Naive thymus-derived CD8-positive, alpha-beta T cell (primary cell): ENCODE measurements at regions of chr12 and their contacts with region 1.

Region 1: DNA sequence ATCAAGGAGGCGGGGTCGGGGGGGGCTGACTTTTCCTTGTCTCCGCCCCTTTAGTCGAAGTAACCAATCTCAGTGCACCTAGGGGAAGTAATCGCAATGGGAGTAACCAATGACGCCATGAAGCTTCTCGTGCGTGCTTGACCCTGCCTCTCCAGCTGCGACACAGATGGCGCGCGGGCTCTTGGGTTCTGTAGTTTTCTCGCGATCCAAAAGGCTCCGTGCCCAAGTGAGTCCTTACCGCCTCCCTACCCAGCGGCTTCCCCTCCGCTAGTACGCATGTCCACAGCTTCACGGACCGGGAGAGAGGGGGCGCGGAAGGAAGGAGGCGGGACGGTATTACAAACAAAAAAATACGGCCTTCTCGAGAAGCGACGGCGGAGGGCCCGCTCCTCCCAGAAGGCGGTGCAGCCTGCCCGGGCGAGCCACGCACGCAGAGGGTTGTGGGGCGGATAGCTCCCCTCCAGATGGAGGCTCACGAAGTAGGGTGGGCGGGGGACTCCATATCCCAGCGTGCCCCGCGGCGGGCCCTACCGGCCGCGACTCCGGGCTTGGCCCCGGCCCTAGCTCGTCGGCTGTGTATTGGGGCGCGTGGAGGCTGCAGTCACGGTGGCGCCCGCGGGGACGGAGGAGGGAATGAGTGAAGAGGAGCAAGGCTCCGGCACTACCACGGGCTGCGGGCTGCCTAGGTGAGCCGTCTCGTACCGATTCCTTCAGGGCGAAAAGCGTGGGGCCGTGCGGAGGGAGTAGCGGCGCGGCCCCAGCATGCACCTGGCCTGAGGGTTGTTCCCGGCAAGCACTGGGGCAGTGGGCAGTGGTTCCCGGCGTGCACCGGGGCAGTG is at the start of gene TARBP2:
- DNase-seq: peak; percentile 90 to 99 (median 99)
- ATAC-seq: peak; percentile 78 to 81
- H3K4me3 Mint-ChIP-seq: peak within 1 kb of the TSS; percentile 89 to 96 (median 94)
- H3K27ac Mint-ChIP-seq: peak within 1 kb of the TSS; percentile 90 to 99 (median 97)
- H3K4me1 Mint-ChIP-seq: peaks cover 22 to 55% (median 44%) of the 10 kb centered on the region in 4 donors
- H3K27me3 Mint-ChIP-seq: no peaks in the 10 kb centered on the region
- polyA plus RNA-seq, gene TARBP2: 27.0 to 32.1 (median 27.9) TPM

Region 2: GRCh38 chr12:53295070-53295890 is 205.7 kb before region 1 on chr12 and contains the start of gene PFDN5:
- POLR2A ChIA-PET with region 1: interaction called, 11 read pairs
- DNase-seq: peak; percentile 72 to 94 (median 87)
- ATAC-seq: peak; percentile 90 to 93
- H3K4me3 Mint-ChIP-seq: peak within 1 kb of the TSS; percentile 95 to 100 (median 99)
- H3K27ac Mint-ChIP-seq: peak within 1 kb of the TSS; percentile 97 to 100 (median 99)
- H3K4me1 Mint-ChIP-seq: peaks cover 10 to 61% (median 46%) of the 10 kb centered on the region in 4 donors
- H3K27me3 Mint-ChIP-seq: no peaks in the 10 kb centered on the region
- polyA plus RNA-seq, gene PFDN5: 1,657 to 1,928 (median 1,896) TPM

Region 3: GRCh38 chr12:53402871-53403270 is 98.1 kb before region 1 on chr12:
- POLR2A ChIA-PET with region 1: no interaction called
- DNase-seq: no peak
- ATAC-seq: no peak
- H3K4me3 Mint-ChIP-seq: no peak overlapping the region
- H3K27ac Mint-ChIP-seq: peak overlapping the region in 1 of 10 donors; percentile 44
- H3K4me1 Mint-ChIP-seq: peaks cover 0 to 20% (median 8%) of the 10 kb centered on the region in 4 donors
- H3K27me3 Mint-ChIP-seq: no peaks in the 10 kb centered on the region

Region 4: DNA sequence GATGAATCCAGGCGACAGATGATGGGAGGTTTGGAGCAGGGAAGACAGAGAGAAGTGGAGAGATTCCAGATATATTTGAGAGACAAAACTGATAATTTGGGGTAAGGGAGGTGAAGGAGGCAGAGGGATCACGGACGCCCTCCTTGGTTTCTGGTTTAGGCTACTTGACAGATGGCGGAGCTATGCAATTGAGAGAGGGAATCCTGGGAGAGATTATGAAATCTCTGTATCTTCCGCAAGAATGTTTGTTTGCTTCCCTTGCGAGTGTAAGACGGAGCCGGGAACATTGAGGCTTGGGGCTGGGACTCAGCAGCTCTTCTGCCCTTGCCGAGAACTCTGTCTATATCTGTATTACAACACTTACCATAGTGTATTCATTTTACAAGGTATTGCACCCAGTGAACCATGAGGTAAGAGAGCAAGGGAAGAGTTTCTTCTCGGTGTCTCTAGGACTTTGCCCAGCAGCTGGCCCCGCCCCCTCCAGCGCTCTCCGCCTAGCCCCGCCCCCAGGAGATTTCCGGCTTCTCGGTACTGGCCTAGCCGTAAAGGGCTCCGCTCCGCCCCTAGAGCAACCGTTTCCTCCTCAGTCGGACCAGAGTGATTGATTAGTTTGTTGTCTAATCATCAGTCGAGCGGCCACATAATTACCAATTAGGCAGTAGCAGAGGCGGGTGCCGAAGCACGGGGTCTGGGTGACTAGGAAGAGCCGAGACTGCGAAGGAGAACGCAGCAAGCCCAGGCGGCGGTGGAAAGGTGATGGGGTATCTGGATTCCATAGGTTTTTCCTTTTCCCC is 59.8 kb before region 1 on chr12 and contains the start of gene PRR13:
- POLR2A ChIA-PET with region 1: interaction called, 37 read pairs
- DNase-seq: peak; percentile 90 to 99 (median 97)
- ATAC-seq: peak; percentile 98
- H3K4me3 Mint-ChIP-seq: peak within 1 kb of the TSS; percentile 90 to 100 (median 96)
- H3K27ac Mint-ChIP-seq: peak within 1 kb of the TSS; percentile 90 to 99 (median 96)
- H3K4me1 Mint-ChIP-seq: peaks cover 17 to 48% (median 44%) of the 10 kb centered on the region in 4 donors
- H3K27me3 Mint-ChIP-seq: no peaks in the 10 kb centered on the region
- polyA plus RNA-seq, gene PRR13: 513 to 535 (median 534) TPM

Region 5: GRCh38 chr12:53476769-53477209 is 24.2 kb before region 1 on chr12:
- POLR2A ChIA-PET with region 1: interaction called, 14 read pairs
- DNase-seq: peak in 1 of 10 donors; percentile 23
- ATAC-seq: peak; percentile 33 to 46
- H3K4me3 Mint-ChIP-seq: no peak overlapping the region
- H3K27ac Mint-ChIP-seq: peak overlapping the region in 9 of 10 donors; percentile 12 to 87 (median 53)
- H3K4me1 Mint-ChIP-seq: peaks cover 28 to 49% (median 42%) of the 10 kb centered on the region in 4 donors
- H3K27me3 Mint-ChIP-seq: no peaks in the 10 kb centered on the region

Region 6: GRCh38 chr12:53543539-53543938 is 42.5 kb after region 1 on chr12:
- POLR2A ChIA-PET with region 1: no interaction called
- DNase-seq: peak in 9 of 10 donors; percentile 11 to 75 (median 58)
- ATAC-seq: peak; percentile 96
- H3K4me3 Mint-ChIP-seq: peak overlapping the region in 3 of 10 donors; percentile 6 to 44 (median 23)
- H3K27ac Mint-ChIP-seq: peak overlapping the region in 9 of 10 donors; percentile 37 to 87 (median 77)
- H3K4me1 Mint-ChIP-seq: peaks cover 3 to 20% (median 12%) of the 10 kb centered on the region in 4 donors
- H3K27me3 Mint-ChIP-seq: no peaks in the 10 kb centered on the region